ENCODE measurements at regions of chr19 and their contacts with region 1.

Region 1: DNA sequence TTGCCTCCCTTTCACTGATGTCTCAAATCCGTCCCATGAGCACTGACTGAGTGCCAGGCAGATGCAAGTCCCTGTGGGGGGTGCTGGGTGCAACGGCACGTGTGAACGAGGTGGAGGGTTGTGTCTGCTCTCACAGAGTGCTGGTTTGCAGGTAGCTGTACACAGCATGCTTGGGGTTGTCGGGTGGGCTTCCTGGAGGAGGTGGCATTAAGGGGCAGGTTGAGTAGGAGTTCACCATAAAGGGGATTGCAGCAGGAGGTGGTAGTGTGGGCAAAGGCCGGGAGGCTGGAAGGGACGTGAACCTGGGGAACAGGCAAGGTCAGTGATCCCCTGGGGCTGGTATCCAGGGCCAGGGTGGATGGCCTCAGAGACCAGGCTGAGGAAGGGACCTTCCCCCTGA is 17.2 kb downstream of the COLGALT1 start:
- H3K4me3 ChIP-seq: no peak overlapping the region
- H3K27ac ChIP-seq: no peak overlapping the region
- H3K4me1 ChIP-seq: no peaks in the 10 kb centered on the region
- CTCF ChIP-seq: no peak

Region 2: DNA sequence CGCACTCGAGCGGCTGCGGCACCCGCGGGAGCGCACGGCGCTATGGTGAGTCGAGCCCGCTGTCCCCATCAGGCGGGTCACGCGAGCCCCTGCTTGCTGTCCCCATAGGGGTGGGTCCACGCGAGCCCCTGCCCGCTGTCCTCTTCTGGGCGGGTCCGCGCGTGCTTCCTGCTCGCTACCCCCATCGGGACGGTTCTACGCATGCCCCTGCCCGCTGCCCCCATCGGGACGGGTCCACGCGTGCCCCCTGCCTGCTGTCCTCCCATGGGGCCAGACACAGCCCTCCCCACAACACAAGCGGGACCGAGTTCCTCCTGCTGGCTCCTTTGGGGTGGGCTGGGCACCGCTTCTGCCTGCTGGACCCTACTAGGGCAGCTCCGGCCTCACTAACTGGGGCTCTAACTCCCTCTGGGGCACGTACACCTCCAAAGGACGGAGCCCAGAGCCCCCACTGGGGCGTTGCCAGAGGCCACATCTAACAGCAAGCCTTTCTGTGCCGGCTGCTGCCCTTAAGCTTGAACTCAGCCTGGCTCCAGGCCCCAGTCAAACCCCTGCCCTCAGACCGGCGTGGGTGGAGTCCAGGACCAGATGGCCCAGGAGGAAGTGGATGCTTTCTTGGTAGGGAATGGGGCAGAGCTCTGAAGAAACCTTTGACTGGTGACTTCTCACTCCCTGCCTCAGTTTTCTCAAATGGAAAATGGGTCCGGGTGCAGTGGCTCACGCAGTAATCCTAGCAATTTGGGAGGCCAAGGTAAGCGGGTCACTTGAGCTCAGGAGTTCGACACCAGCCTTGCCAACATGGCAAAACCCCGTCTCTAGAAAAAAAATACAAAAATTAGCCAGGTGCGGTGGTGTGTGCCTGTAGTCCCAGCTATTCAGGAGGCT is 16.5 kb before region 1 on chr19:
- CTCF ChIA-PET with region 1: interaction called, 25 read pairs
- POLR2A ChIA-PET with region 1: interaction called, 5 read pairs
- H3K4me3 ChIP-seq: peak overlapping the region; percentile 88
- H3K27ac ChIP-seq: peak overlapping the region; percentile 56; the same call in 1 of the 2 replicates
- H3K4me1 ChIP-seq: no peaks in the 10 kb centered on the region; the same call in 1 of the 2 replicates
- CTCF ChIP-seq: peak; percentile 70